B cell (primary cell): ENCODE measurements at regions of chr2 and their contacts with region 1.

Region 1: GRCh38 chr2:191555092-191555742 is 122.7 kb upstream of the NABP1 start:
- DNase-seq: peak; percentile 84
- ATAC-seq: peak; percentile 78
- H3K4me3 ChIP-seq: no peak overlapping the region
- H3K4me3 Mint-ChIP-seq: no peak overlapping the region
- H3K27ac ChIP-seq: no peak overlapping the region
- H3K27ac Mint-ChIP-seq: no peak overlapping the region
- H3K4me1 ChIP-seq: peaks cover 0 to 3% of the 10 kb centered on the region in 2 donors
- H3K4me1 Mint-ChIP-seq: peaks cover 3% of the 10 kb centered on the region
- H3K27me3 ChIP-seq: peaks cover 0 to 4% (median 0%) of the 10 kb centered on the region in 4 experiments
- H3K27me3 Mint-ChIP-seq: peaks cover 15% of the 10 kb centered on the region
- CTCF ChIP-seq: peak; percentile 86

Region 2: DNA sequence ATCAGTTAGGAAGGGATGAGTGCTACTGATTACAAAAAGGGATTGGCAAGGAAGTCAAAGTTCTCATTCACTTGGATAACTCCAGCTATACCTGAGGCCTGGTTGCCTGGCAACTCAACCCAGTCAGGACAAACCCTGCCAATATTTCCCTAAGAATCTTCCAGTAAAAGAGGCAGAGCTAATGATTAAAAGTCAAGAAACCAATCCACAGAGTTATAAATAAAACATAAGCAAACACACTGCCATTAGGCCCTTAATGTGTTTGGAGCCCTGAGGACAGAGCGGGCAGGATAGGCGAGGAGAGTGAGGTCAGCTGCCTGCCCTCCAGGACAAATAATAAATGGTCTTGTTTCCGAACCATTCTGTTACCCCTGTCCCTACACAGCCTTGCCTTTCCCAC is 92.8 kb before region 1 on chr2:
- CTCF ChIA-PET with region 1: no interaction called
- POLR2A ChIA-PET with region 1: no interaction called
- intact Hi-C with region 1: no loop called
- DNase-seq: no peak
- ATAC-seq: no peak
- H3K4me3 ChIP-seq: no peak overlapping the region
- H3K4me3 Mint-ChIP-seq: no peak overlapping the region
- H3K27ac ChIP-seq: no peak overlapping the region
- H3K27ac Mint-ChIP-seq: no peak overlapping the region
- H3K4me1 ChIP-seq: no peaks in the 10 kb centered on the region
- H3K4me1 Mint-ChIP-seq: no peaks in the 10 kb centered on the region
- H3K27me3 ChIP-seq: no peaks in the 10 kb centered on the region
- H3K27me3 Mint-ChIP-seq: peaks cover 9% of the 10 kb centered on the region
- CTCF ChIP-seq: no peak

Region 3: GRCh38 chr2:191544461-191545062 is 10.7 kb before region 1 on chr2:
- CTCF ChIA-PET with region 1: interaction called, 10 read pairs
- POLR2A ChIA-PET with region 1: no interaction called
- intact Hi-C with region 1: no loop called
- DNase-seq: no peak
- ATAC-seq: no peak
- H3K4me3 ChIP-seq: no peak overlapping the region
- H3K4me3 Mint-ChIP-seq: no peak overlapping the region
- H3K27ac ChIP-seq: no peak overlapping the region
- H3K27ac Mint-ChIP-seq: no peak overlapping the region
- H3K4me1 ChIP-seq: no peaks in the 10 kb centered on the region
- H3K4me1 Mint-ChIP-seq: no peaks in the 10 kb centered on the region
- H3K27me3 ChIP-seq: peaks cover 0 to 7% (median 0%) of the 10 kb centered on the region in 4 experiments
- H3K27me3 Mint-ChIP-seq: peaks cover 14% of the 10 kb centered on the region
- CTCF ChIP-seq: no peak

Region 4: GRCh38 chr2:191691016-191691735 is 136.0 kb after region 1 on chr2:
- CTCF ChIA-PET with region 1: interaction called, 21 read pairs
- POLR2A ChIA-PET with region 1: no interaction called
- intact Hi-C with region 1: loop called (anchors 1 kb)
- DNase-seq: peak; percentile 83
- ATAC-seq: peak; percentile 87
- H3K4me3 ChIP-seq: no peak overlapping the region
- H3K4me3 Mint-ChIP-seq: no peak overlapping the region
- H3K27ac ChIP-seq: no peak overlapping the region
- H3K27ac Mint-ChIP-seq: no peak overlapping the region
- H3K4me1 ChIP-seq: peaks cover 3 to 7% of the 10 kb centered on the region in 2 donors
- H3K4me1 Mint-ChIP-seq: peaks cover 20% of the 10 kb centered on the region
- H3K27me3 ChIP-seq: no peaks in the 10 kb centered on the region
- H3K27me3 Mint-ChIP-seq: no peaks in the 10 kb centered on the region
- CTCF ChIP-seq: peak; percentile 86

Region 5: GRCh38 chr2:191738003-191738402 is 182.8 kb after region 1 on chr2:
- CTCF ChIA-PET with region 1: interaction called, 13 read pairs
- POLR2A ChIA-PET with region 1: no interaction called
- intact Hi-C with region 1: no loop called
- DNase-seq: no peak
- ATAC-seq: no peak
- H3K4me3 ChIP-seq: no peak overlapping the region
- H3K4me3 Mint-ChIP-seq: no peak overlapping the region
- H3K27ac ChIP-seq: no peak overlapping the region
- H3K27ac Mint-ChIP-seq: no peak overlapping the region
- H3K4me1 ChIP-seq: no peaks in the 10 kb centered on the region
- H3K4me1 Mint-ChIP-seq: no peaks in the 10 kb centered on the region
- H3K27me3 ChIP-seq: no peaks in the 10 kb centered on the region
- H3K27me3 Mint-ChIP-seq: peaks cover 3% of the 10 kb centered on the region
- CTCF ChIP-seq: no peak